Activated B cell treated with CpG ODN at 0.5 μM for 24 hours (primary cell): ENCODE measurements at regions of chr6 and their contacts with region 1.

Region 1: DNA sequence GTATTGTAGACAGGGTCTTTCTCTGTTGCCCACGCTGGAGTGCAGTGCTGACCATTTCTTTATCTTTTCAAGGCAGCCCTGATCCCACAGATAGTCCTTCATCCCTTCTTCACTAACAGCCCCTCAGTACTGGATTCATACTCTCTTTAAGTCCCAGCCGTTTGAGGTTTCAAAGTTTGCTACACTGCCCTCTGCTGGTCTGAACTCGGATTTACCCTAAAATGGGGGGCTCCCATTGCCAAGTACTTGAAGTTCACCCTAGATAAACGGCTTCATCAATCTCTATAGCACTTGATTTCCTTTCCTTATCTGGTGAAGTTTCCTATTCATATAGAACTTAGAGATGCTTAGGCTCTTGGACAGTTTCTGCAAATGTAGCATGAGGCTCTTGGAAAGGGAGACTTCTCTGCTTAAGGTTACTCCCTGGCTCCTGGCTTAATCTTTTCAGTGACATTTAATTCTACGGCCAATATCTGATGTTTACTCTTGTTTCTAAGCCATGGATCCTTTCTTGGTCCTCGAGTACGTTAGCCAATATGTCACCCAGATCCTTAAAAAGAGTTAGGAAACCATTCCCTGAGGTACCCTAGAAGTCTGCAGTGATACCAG is 21.4 kb upstream of the PREP start:
- DNase-seq: no peak
- ATAC-seq: peak; percentile 57
- H3K4me3 Mint-ChIP-seq: no peak overlapping the region
- H3K27ac Mint-ChIP-seq: no peak overlapping the region
- H3K4me1 Mint-ChIP-seq: no peaks in the 10 kb centered on the region
- H3K27me3 Mint-ChIP-seq: peaks cover 4% of the 10 kb centered on the region
- CTCF ChIP-seq: peak; percentile 79

Region 2: GRCh38 chr6:104682722-104683643 is 741.3 kb before region 1 on chr6:
- CTCF ChIA-PET with region 1: no interaction called
- POLR2A ChIA-PET with region 1: no interaction called
- intact Hi-C with region 1: loop called (anchors 10 kb)
- DNase-seq: no peak
- ATAC-seq: no peak
- H3K4me3 Mint-ChIP-seq: no peak overlapping the region
- H3K27ac Mint-ChIP-seq: no peak overlapping the region
- H3K4me1 Mint-ChIP-seq: no peaks in the 10 kb centered on the region
- H3K27me3 Mint-ChIP-seq: peaks cover 1% of the 10 kb centered on the region
- CTCF ChIP-seq: no peak

Region 3: GRCh38 chr6:105087571-105088211 is 336.6 kb before region 1 on chr6:
- CTCF ChIA-PET with region 1: interaction called, 33 read pairs
- POLR2A ChIA-PET with region 1: interaction called, 3 read pairs
- intact Hi-C with region 1: loop called (anchors 1 kb)
- DNase-seq: no peak
- ATAC-seq: no peak
- H3K4me3 Mint-ChIP-seq: no peak overlapping the region
- H3K27ac Mint-ChIP-seq: no peak overlapping the region
- H3K4me1 Mint-ChIP-seq: no peaks in the 10 kb centered on the region
- H3K27me3 Mint-ChIP-seq: no peaks in the 10 kb centered on the region
- CTCF ChIP-seq: no peak